ENCODE measurements at regions of chr17 and their contacts with region 1.

Region 1: DNA sequence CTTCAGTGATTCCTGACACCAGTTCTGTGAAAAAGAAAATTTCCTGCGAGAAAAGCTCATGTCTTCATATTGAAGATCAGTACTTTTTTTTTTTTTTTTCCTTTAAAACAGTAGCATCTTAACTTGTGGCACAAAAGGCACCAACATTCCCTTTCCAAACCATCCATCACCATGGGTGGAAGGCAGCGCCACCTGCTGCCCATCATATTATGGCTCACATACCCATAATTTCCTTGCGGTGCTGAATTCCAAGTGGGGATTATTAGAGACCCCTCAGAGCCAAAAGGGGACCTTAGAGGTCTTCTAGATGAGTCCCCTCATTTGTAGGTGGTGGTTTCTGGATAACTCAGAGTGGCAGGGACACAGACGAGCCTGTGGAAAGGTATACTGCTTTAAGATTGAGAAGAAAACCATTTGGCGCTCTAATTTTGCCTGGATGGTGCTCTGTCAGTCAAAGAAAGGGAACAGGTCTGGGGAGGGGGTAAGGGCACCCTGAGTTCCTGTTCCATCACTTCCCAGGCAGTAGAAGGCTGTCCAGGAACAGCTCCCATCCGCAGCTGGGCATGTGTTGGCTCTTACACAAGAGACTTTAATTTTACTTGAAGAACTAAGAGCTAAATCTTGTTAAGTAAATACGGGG is 7.9 kb upstream of the SOST start:
- DNase-seq: peak; percentile 56
- H3K27ac ChIP-seq: no peak overlapping the region
- CTCF ChIP-seq: peak; percentile 91

Region 2: DNA sequence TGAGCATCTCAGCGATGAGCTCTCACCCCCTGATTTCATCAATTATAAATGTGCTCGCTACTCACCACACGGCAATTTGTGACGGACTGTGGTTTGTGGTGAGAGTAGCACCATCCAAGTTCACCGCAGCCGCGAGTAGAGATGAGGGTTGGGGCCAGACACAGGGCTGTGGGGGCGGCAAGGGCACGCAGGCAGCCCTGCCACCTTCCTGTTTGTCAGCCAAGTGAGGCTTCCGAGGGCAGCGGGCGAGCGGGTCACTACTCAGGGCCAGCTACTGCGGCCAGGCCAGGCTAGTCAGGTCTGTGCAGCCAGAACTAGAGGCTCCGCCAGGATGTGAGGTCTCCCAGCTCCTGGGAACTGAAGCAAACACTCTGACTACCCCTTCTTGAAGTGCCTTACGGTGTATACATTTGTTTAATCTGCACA is 65.2 kb before region 1 on chr17:
- CTCF ChIA-PET with region 1: interaction called, 181 read pairs
- POLR2A ChIA-PET with region 1: no interaction called
- DNase-seq: no peak
- H3K27ac ChIP-seq: no peak overlapping the region
- CTCF ChIP-seq: no peak

Region 3: DNA sequence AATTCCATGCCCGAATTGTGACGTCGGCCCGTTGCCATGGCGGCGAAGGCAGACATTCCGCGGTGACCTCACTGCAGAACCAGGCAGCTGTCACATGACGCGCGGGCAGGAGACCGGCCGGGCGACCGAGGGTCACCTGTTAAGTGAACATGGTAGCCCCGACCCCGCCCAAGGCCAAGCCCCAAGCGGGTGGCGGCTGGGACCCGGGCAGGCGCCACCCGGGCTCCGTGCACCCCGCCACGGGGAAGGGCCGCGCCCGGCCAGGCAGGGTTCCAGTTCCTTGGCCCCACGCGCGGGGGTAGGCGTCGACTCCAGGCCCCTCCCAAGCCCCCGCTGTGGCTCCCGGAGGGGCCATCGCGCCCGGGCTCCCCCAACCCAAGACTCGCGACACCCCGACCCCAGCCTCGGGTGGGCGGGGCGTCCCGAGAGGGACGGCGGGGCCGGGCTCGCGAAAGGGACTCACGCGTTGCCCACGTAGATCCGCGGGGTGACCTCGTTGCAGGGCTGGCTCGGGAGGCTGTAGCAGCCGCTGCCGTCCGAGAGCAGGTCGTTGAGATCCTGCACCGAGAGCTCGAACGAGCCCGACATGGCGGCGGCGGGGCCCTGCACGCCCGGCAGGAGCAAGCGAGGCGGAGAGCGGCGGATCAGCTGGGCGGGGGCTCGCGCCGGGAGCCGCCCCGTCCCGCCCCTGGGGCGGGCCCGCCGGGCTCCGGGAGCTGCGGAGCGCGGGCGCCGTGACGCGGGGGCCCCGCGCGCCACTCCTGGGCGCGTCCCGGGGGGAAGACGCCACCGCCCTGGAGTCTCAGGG is 12.0 kb after region 1 on chr17 and contains the start of gene DUSP3:
- CTCF ChIA-PET with region 1: interaction called, 15 read pairs
- POLR2A ChIA-PET with region 1: no interaction called
- DNase-seq: peak; percentile 91
- H3K27ac ChIP-seq: peak within 1 kb of the TSS; percentile 86
- CTCF ChIP-seq: no peak

Measured in RWPE1 (cell line).